ENCODE measurements at regions of chr11 and their contacts with region 1.

Region 1: DNA sequence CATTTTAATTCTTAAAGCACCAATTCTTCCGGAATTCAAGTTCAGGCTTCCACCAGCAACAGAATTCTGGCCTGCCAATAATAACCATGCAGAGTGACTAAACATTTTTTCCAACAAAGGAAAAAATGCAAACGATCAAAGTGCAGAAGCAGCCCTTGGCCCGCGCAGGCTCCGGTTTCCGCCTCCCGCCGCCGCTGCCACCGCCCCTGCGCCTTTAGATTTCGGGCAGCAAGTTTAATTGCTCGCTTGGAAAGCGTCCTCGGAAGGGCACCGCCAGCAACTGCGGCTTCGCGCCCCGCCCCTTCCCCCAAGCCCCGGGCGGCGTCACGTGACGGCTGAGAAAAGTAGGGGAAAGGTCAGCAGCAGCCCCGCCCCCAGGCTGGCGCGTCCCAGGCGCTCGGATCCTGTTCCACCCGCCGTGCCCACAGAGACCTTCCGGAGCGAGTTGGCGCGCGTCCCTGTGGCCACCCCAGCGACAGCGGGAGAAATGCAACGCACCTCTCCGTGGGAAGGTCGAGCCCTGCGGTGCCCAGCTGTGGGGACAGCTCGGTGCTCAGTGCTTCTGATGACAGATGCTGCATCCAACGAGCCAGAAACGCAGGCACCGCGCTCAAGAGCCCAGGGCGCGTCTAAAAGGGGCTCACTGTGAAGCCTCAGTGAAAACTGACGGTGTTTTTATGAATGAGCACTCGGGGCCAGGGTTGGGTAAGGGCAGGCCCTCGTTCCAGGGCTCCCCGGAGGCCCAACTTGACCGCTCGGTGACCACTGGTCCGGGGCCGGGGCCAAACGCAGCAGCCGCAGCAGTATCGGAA is 2.5 kb downstream of the CPT1A start:
- DNase-seq: peak; percentile 94
- ATAC-seq: peak; percentile 62
- H3K4me3 Mint-ChIP-seq: peak overlapping the region; percentile 85
- H3K27ac Mint-ChIP-seq: peak overlapping the region; percentile 91
- H3K4me1 Mint-ChIP-seq: peaks cover 54% of the 10 kb centered on the region
- H3K27me3 Mint-ChIP-seq: no peaks in the 10 kb centered on the region
- CTCF ChIP-seq: no peak

Region 2: GRCh38 chr11:68271781-68272608 is 567.3 kb before region 1 on chr11 and contains the start of gene C11orf24:
- CTCF ChIA-PET with region 1: no interaction called
- POLR2A ChIA-PET with region 1: no interaction called
- intact Hi-C with region 1: loop called (anchors 2 kb)
- DNase-seq: peak; percentile 95
- ATAC-seq: peak; percentile 78
- H3K4me3 Mint-ChIP-seq: peak within 1 kb of the TSS; percentile 95
- H3K27ac Mint-ChIP-seq: peak within 1 kb of the TSS; percentile 98
- H3K4me1 Mint-ChIP-seq: peaks cover 79% of the 10 kb centered on the region
- H3K27me3 Mint-ChIP-seq: no peaks in the 10 kb centered on the region
- CTCF ChIP-seq: no peak
- total RNA-seq, gene C11orf24: 75.5 and 78.0 TPM in 2 replicates

Region 3: GRCh38 chr11:68610452-68611116 is 228.7 kb before region 1 on chr11:
- CTCF ChIA-PET with region 1: interaction called, 8 read pairs
- POLR2A ChIA-PET with region 1: no interaction called
- intact Hi-C with region 1: loop called (anchors 1 kb)
- DNase-seq: no peak
- ATAC-seq: no peak
- H3K4me3 Mint-ChIP-seq: no peak overlapping the region
- H3K27ac Mint-ChIP-seq: no peak overlapping the region
- H3K4me1 Mint-ChIP-seq: no peaks in the 10 kb centered on the region
- H3K27me3 Mint-ChIP-seq: no peaks in the 10 kb centered on the region
- CTCF ChIP-seq: no peak

Region 4: DNA sequence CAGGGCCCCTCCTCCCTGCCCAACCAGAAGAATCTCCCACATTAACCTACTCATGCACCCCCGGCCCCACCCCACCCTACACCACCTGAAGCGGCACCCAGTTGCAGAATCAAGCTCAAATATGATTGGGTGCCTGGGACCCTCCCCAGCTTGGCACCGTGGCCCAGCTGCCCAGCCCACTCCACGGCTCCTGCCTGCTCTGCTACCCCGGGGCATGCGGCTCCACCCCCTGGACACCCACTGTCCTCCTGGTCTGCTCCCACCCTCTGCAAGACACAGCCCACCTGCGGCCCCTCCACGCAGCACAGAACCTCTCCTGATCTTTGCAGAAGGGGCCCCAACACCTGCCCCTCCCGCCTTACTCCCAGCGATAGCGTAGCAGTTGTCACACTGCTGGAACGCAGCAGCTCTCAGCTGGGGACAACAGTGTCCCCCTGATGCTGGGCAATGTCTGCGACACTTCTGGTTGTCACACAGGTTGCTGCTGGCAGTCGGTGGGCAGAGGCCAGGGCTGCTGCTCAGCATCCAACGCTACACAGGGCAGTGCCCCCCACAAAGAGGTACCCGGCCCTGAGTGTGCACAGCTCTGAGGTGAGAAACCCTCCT is 55.9 kb before region 1 on chr11:
- CTCF ChIA-PET with region 1: no interaction called
- POLR2A ChIA-PET with region 1: no interaction called
- intact Hi-C with region 1: no loop called
- DNase-seq: no peak
- ATAC-seq: no peak
- H3K4me3 Mint-ChIP-seq: no peak overlapping the region
- H3K27ac Mint-ChIP-seq: no peak overlapping the region
- H3K4me1 Mint-ChIP-seq: no peaks in the 10 kb centered on the region
- H3K27me3 Mint-ChIP-seq: no peaks in the 10 kb centered on the region
- CTCF ChIP-seq: no peak

Region 5: DNA sequence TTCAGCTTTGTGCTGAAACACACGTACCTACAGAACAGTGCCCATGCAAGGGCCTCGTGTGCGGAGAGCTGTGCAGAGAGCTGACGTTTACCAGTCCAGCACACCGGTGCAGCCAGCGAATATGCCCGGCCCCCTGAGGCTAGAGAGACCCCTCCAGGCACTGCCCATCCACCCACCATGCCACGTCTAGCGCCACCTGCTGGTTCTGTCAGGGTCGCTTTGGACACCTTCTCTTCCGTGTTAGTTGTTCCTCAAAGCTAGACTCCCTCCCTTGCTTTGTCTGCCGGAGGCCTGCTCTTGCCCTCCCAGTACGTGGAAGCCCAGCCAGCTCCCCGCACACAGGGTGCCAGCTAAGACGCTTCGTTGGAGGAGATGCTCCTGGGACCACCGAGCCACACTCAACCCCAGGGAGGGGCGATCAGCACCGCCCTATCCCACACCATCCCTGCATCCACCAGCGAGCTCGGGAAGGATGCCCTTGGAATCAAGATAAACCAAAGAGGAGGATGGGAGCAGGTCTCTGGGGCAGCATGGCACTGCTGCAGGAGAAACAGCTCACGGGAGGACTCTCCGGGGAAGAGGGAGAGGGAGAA is 40.9 kb before region 1 on chr11:
- CTCF ChIA-PET with region 1: interaction called, 20 read pairs
- POLR2A ChIA-PET with region 1: interaction called, 3 read pairs
- intact Hi-C with region 1: loop called (anchors 5 kb)
- DNase-seq: no peak
- ATAC-seq: peak; percentile 28
- H3K4me3 Mint-ChIP-seq: no peak overlapping the region
- H3K27ac Mint-ChIP-seq: no peak overlapping the region
- H3K4me1 Mint-ChIP-seq: no peaks in the 10 kb centered on the region
- H3K27me3 Mint-ChIP-seq: no peaks in the 10 kb centered on the region
- CTCF ChIP-seq: no peak

Region 6: GRCh38 chr11:68903288-68904247 is 64.3 kb after region 1 on chr11 and contains the starts of genes IGHMBP2 and MRPL21:
- CTCF ChIA-PET with region 1: no interaction called
- POLR2A ChIA-PET with region 1: interaction called, 4 read pairs
- intact Hi-C with region 1: loop called (anchors 1 kb)
- DNase-seq: peak; percentile 87
- ATAC-seq: peak; percentile 96
- H3K4me3 Mint-ChIP-seq: peak within 1 kb of the TSS; percentile 97
- H3K27ac Mint-ChIP-seq: peak within 1 kb of the TSS; percentile 82
- H3K4me1 Mint-ChIP-seq: peaks cover 44% of the 10 kb centered on the region
- H3K27me3 Mint-ChIP-seq: no peaks in the 10 kb centered on the region
- CTCF ChIP-seq: no peak
- total RNA-seq, gene IGHMBP2: 24.2 and 33.8 TPM in 2 replicates
- total RNA-seq, gene MRPL21: 49.9 and 60.0 TPM in 2 replicates

Region 7: GRCh38 chr11:69088676-69089146 is 249.5 kb after region 1 on chr11:
- CTCF ChIA-PET with region 1: interaction called, 4 read pairs
- POLR2A ChIA-PET with region 1: no interaction called
- intact Hi-C with region 1: loop called (anchors 2 kb)
- DNase-seq: peak; percentile 54
- ATAC-seq: peak; percentile 84
- H3K4me3 Mint-ChIP-seq: no peak overlapping the region
- H3K27ac Mint-ChIP-seq: no peak overlapping the region
- H3K4me1 Mint-ChIP-seq: no peaks in the 10 kb centered on the region
- H3K27me3 Mint-ChIP-seq: no peaks in the 10 kb centered on the region
- CTCF ChIP-seq: no peak

Region 8: DNA sequence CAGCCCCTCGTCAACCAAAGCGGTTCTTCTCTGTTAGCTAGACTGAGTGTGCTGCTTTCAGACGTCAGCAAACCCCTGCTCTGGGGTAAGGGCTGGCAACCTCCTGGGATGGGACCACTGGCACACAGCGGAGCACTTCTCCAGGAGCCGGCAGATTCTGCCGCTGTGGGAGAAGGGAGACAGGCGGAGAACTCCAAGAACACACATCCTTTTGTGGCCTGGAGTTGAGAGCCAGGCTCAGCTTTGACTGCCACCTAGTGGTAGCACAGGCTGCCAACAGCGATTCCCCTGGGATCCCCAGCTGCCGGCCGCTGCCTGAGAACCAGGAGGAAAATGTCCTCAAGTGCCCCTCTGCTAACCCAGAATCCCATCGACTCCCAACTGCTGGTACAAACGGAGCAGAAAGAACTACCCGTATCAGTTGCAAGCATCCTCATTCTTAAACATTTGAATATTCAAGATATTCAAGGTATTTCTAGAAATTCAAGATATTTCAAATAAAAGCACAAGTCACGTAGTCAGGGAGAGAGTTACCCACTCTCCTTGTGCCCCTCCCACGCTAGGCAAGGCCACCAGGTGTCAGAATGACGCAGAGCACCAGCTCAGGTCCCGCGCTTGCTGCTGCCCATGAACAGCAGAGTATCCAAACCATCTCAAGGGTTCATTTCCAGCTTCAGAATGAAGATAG is 831.0 kb after region 1 on chr11:
- CTCF ChIA-PET with region 1: no interaction called
- POLR2A ChIA-PET with region 1: no interaction called
- intact Hi-C with region 1: loop called (anchors 10 kb)
- DNase-seq: peak; percentile 58
- ATAC-seq: peak; percentile 31
- H3K4me3 Mint-ChIP-seq: peak overlapping the region; percentile 24
- H3K27ac Mint-ChIP-seq: no peak overlapping the region
- H3K4me1 Mint-ChIP-seq: peaks cover 28% of the 10 kb centered on the region
- H3K27me3 Mint-ChIP-seq: peaks cover under 1% of the 10 kb centered on the region
- CTCF ChIP-seq: peak; percentile 27

Measured in activated B cell treated with CpG ODN at 0.5 μM for 24 hours (primary cell).